Right ventricle myocardium inferior (tissue), 1 donor: ENCODE measurements at regions of chr17 and their contacts with region 1.

Region 1: GRCh38 chr17:68777243-68777855 is 176.2 kb upstream of the FAM20A start:
- DNase-seq: no peak
- ATAC-seq: peak; percentile 79

Region 2: GRCh38 chr17:68794636-68795434 is 17.5 kb after region 1 on chr17:
- intact Hi-C with region 1: loop called (anchors 1 kb)
- DNase-seq: peak; percentile 69
- ATAC-seq: peak; percentile 75

Region 3: GRCh38 chr17:68972119-68972704 is 194.9 kb after region 1 on chr17:
- intact Hi-C with region 1: loop called (anchors 5 kb)
- DNase-seq: no peak
- ATAC-seq: peak; percentile 46

Region 4: GRCh38 chr17:69235338-69235930 is 458.1 kb after region 1 on chr17:
- intact Hi-C with region 1: loop called (anchors 2 kb)
- DNase-seq: peak; percentile 78
- ATAC-seq: peak; percentile 94